ENCODE measurements at regions of chr4 and their contacts with region 1.

Region 1: GRCh38 chr4:27010334-27010940 is 149.8 kb downstream of the STIM2 start:
- DNase-seq: peak; percentile 50 to 59 (median 57)
- H3K4me3 ChIP-seq: no peak overlapping the region
- H3K4me3 Mint-ChIP-seq: no peak overlapping the region
- H3K27ac ChIP-seq: no peak overlapping the region
- H3K27ac Mint-ChIP-seq: peak overlapping the region in 6 of 7 donors; percentile 4 to 69 (median 63)
- H3K4me1 ChIP-seq: no peaks in the 10 kb centered on the region
- H3K4me1 Mint-ChIP-seq: peaks cover 4 to 17% (median 11%) of the 10 kb centered on the region in 4 donors
- H3K27me3 ChIP-seq: no peaks in the 10 kb centered on the region
- H3K27me3 Mint-ChIP-seq: no peaks in the 10 kb centered on the region

Region 2: DNA sequence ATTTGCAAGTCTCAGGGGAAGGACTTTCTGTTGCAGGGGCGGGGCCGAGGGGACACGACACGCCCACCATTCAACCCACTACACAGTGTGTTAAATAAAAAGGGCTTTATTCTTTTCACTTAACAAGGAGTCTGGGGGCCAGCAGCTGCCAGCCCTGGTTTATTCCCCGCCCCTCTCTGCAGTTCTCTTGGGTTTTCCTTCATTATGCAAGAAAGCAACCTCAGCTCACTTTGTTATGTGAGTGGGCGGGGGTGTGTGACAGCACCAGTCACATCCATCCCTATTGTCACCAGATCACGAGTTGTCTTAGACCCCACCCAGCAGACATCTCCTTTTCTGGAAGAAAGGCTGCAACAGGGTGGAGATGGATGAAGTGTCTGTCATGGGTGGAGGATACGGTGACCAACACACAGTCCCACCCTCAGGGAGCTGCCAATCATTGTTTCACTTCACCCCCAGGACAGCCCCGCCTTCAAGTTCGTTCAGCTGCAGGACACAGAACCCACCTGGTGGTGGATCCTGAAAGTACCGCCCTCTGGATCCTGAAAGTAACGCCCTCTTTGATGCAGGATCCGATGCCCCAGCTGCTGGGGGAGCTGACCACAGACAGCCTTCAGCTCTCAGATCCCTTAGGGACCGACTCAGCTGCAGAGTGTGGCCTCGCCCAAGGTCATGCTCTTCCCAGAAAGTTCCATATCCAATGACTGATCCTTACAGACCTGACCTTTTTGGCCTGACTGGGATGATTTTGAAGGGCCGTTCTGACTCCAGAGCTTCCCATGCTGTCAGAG is 1016.8 kb before region 1 on chr4:
- CTCF ChIA-PET with region 1: interaction called, 3 read pairs
- POLR2A ChIA-PET with region 1: no interaction called
- intact Hi-C with region 1: loop called (anchors 1 kb)
- DNase-seq: no peak
- H3K4me3 ChIP-seq: no peak overlapping the region
- H3K4me3 Mint-ChIP-seq: no peak overlapping the region
- H3K27ac ChIP-seq: no peak overlapping the region
- H3K27ac Mint-ChIP-seq: no peak overlapping the region
- H3K4me1 ChIP-seq: no peaks in the 10 kb centered on the region
- H3K4me1 Mint-ChIP-seq: peaks cover 1 to 8% (median 3%) of the 10 kb centered on the region in 4 donors
- H3K27me3 ChIP-seq: no peaks in the 10 kb centered on the region
- H3K27me3 Mint-ChIP-seq: no peaks in the 10 kb centered on the region

Region 3: GRCh38 chr4:26028793-26029567 is 981.5 kb before region 1 on chr4:
- CTCF ChIA-PET with region 1: no interaction called
- POLR2A ChIA-PET with region 1: no interaction called
- intact Hi-C with region 1: loop called (anchors 5 kb)
- DNase-seq: peak in 4 of 5 donors; percentile 37 to 49 (median 45)
- H3K4me3 ChIP-seq: no peak overlapping the region
- H3K4me3 Mint-ChIP-seq: peak overlapping the region in 1 of 8 donors; percentile 24
- H3K27ac ChIP-seq: no peak overlapping the region
- H3K27ac Mint-ChIP-seq: no peak overlapping the region
- H3K4me1 ChIP-seq: no peaks in the 10 kb centered on the region
- H3K4me1 Mint-ChIP-seq: peaks cover 0 to 2% (median under 1%) of the 10 kb centered on the region in 4 donors
- H3K27me3 ChIP-seq: no peaks in the 10 kb centered on the region
- H3K27me3 Mint-ChIP-seq: peaks cover 5 to 6% of the 10 kb centered on the region in 2 donors

Region 4: DNA sequence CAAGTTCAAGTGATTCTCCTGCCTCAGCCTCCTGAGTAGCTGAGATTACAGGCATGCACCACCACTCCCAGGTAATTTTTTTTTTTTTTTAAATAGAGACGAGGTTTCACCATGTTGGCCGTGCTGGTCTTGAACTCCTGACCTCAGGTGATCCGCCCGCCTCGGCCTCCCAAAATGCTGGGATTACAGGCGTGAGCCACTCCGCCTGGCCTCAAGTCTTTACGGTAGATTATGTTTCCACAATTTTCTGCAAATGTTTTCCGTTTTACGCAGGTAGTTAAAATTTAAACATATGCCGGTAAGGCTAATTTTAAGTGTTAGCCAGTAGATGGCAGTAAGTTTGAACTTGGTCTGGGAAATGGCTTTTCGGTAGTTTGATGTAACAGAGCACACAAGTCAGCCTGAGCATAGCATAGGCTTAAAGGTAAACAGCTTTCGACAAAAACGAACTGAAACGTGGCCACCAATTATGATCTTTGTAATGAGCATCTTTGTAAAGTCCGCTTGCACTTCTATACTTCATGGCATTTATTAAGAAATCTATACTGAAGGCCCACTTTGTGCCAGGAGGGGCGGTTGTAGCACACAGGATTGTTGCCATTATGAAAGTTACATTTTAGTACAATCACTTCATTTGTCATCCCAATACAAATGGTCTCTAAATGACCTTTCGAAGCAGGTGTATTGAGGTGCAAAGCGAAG is 551.2 kb before region 1 on chr4:
- CTCF ChIA-PET with region 1: interaction called, 82 read pairs
- POLR2A ChIA-PET with region 1: interaction called, 4 read pairs
- intact Hi-C with region 1: loop called (anchors 1 kb)
- DNase-seq: peak in 4 of 5 donors; percentile 34 to 53 (median 44)
- H3K4me3 ChIP-seq: no peak overlapping the region
- H3K4me3 Mint-ChIP-seq: peak overlapping the region in 7 of 8 donors; percentile 50 to 77 (median 64)
- H3K27ac ChIP-seq: no peak overlapping the region
- H3K27ac Mint-ChIP-seq: peak overlapping the region in 2 of 7 donors; percentile 3 to 47
- H3K4me1 ChIP-seq: no peaks in the 10 kb centered on the region
- H3K4me1 Mint-ChIP-seq: peaks cover 6 to 13% (median 10%) of the 10 kb centered on the region in 4 donors
- H3K27me3 ChIP-seq: no peaks in the 10 kb centered on the region
- H3K27me3 Mint-ChIP-seq: peaks cover 0 to 2% of the 10 kb centered on the region in 2 donors

Region 5: DNA sequence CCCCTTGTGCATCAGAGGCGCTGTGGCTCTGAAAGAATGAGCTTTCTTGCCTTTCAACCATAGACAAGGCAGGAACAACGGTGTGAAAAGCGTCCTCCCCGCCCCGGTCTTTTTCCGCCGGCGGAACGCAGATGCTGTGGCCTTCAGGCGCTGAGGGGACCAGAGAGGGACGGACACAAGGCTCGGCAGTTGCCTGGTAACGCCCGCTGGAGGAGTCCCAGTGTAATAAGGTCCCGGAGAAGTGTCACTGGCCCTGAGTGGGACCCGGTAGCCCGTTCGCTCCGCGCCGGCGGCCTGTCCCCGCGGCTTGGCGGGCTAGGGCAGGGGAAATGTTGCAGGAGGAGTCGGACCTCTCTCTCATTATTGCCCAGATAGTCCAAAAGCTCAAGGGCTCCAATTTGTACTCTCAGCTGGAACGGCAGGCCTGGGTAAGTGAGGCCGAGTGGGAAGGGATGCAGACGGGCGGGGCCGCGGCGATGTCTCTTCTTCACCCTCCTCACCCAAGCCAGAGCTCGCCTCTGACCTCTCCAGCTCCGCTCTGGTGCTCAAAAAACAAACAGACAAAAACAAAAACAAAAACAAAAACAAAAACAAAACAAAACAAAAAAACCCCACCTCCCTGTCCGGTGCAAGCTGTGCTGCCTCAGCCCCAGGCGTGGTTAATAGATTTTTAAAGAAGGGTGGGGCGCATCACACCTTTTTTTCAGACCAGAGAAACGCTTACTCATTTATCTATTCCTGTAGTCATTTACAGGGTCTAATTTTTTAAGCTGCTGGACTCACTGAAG is 426.4 kb before region 1 on chr4 and contains the start of gene TBC1D19:
- CTCF ChIA-PET with region 1: interaction called, 4 read pairs
- POLR2A ChIA-PET with region 1: no interaction called
- intact Hi-C with region 1: loop called (anchors 5 kb)
- DNase-seq: peak; percentile 87 to 90 (median 89)
- H3K4me3 ChIP-seq: peak within 1 kb of the TSS; percentile 44 to 75
- H3K4me3 Mint-ChIP-seq: peak within 1 kb of the TSS; percentile 91 to 99 (median 96)
- H3K27ac ChIP-seq: peak within 1 kb of the TSS; percentile 81
- H3K27ac Mint-ChIP-seq: peak within 1 kb of the TSS; percentile 89 to 99 (median 98)
- H3K4me1 ChIP-seq: peaks cover 17% of the 10 kb centered on the region
- H3K4me1 Mint-ChIP-seq: peaks cover 18 to 38% (median 26%) of the 10 kb centered on the region in 4 donors
- H3K27me3 ChIP-seq: no peaks in the 10 kb centered on the region
- H3K27me3 Mint-ChIP-seq: peaks cover 1 to 2% of the 10 kb centered on the region in 2 donors
- total RNA-seq, gene TBC1D19: 7.9 to 9.5 TPM

Region 6: DNA sequence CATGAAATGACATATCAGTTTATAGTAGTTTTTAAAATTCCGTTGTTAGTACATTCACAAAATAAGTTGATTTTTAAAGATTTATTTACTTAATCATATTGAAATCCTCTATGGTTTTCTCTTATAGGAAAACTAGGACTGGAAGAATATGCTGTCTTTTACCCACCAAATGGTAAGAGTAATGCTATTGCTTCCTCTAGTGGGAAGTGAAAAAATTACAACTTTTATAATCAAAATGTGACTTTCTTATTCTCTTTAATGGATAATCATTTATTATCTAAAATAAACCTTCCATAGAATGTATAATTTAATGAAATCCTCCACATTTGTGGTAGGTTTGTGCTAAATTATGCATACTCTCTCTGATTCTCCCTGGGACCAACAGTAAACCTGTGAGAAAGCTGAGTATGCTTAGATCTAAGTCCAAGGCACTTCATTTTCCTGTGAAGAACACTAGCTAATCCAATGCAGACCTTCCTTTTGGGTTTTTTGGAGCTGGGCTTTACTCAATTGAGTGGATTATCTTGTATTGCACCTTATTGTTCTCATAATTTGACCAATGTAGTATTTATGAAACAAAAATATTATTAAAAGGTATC is 290.4 kb before region 1 on chr4:
- CTCF ChIA-PET with region 1: interaction called, 5 read pairs
- POLR2A ChIA-PET with region 1: no interaction called
- intact Hi-C with region 1: loop called (anchors 2 kb)
- DNase-seq: no peak
- H3K4me3 ChIP-seq: no peak overlapping the region
- H3K4me3 Mint-ChIP-seq: no peak overlapping the region
- H3K27ac ChIP-seq: no peak overlapping the region
- H3K27ac Mint-ChIP-seq: no peak overlapping the region
- H3K4me1 ChIP-seq: no peaks in the 10 kb centered on the region
- H3K4me1 Mint-ChIP-seq: peaks cover 0 to 5% (median 3%) of the 10 kb centered on the region in 4 donors
- H3K27me3 ChIP-seq: no peaks in the 10 kb centered on the region
- H3K27me3 Mint-ChIP-seq: no peaks in the 10 kb centered on the region

Region 7: GRCh38 chr4:26787461-26788340 is 222.7 kb before region 1 on chr4:
- CTCF ChIA-PET with region 1: interaction called, 21 read pairs
- POLR2A ChIA-PET with region 1: no interaction called
- intact Hi-C with region 1: loop called (anchors 1 kb)
- DNase-seq: peak; percentile 16 to 46 (median 21)
- H3K4me3 ChIP-seq: no peak overlapping the region
- H3K4me3 Mint-ChIP-seq: no peak overlapping the region
- H3K27ac ChIP-seq: no peak overlapping the region
- H3K27ac Mint-ChIP-seq: peak overlapping the region in 3 of 7 donors; percentile 48 to 70 (median 64)
- H3K4me1 ChIP-seq: no peaks in the 10 kb centered on the region
- H3K4me1 Mint-ChIP-seq: peaks cover 5 to 10% (median 6%) of the 10 kb centered on the region in 4 donors
- H3K27me3 ChIP-seq: no peaks in the 10 kb centered on the region
- H3K27me3 Mint-ChIP-seq: no peaks in the 10 kb centered on the region

Region 8: DNA sequence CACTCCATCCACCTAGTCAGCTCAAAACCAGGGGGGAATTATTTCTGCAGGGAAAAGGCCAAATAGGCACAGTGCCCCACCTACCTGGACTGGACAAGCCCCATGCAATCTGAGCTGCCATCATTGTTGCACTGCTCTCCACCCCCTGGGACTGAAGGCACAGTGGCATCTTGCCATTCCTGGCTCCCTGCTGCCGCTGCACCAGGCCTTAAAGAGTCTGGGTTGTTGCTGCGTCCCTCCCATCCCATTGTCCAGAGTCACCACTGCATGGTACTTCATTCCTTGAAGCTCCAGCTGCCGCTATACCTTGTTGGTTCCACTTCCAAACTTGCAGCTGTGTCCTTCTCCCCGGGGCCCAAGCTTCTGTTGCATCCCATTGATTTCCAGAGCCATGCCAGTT is 479.9 kb after region 1 on chr4:
- CTCF ChIA-PET with region 1: no interaction called
- POLR2A ChIA-PET with region 1: no interaction called
- intact Hi-C with region 1: no loop called
- DNase-seq: no peak
- H3K4me3 ChIP-seq: no peak overlapping the region
- H3K4me3 Mint-ChIP-seq: no peak overlapping the region
- H3K27ac ChIP-seq: no peak overlapping the region
- H3K27ac Mint-ChIP-seq: no peak overlapping the region
- H3K4me1 ChIP-seq: no peaks in the 10 kb centered on the region
- H3K4me1 Mint-ChIP-seq: no peaks in the 10 kb centered on the region
- H3K27me3 ChIP-seq: no peaks in the 10 kb centered on the region
- H3K27me3 Mint-ChIP-seq: no peaks in the 10 kb centered on the region

Measured in CD4-positive, alpha-beta memory T cell (primary cell).